PC-9 (cell line): ENCODE measurements at regions of chr16 and their contacts with region 1.

Region 1: DNA sequence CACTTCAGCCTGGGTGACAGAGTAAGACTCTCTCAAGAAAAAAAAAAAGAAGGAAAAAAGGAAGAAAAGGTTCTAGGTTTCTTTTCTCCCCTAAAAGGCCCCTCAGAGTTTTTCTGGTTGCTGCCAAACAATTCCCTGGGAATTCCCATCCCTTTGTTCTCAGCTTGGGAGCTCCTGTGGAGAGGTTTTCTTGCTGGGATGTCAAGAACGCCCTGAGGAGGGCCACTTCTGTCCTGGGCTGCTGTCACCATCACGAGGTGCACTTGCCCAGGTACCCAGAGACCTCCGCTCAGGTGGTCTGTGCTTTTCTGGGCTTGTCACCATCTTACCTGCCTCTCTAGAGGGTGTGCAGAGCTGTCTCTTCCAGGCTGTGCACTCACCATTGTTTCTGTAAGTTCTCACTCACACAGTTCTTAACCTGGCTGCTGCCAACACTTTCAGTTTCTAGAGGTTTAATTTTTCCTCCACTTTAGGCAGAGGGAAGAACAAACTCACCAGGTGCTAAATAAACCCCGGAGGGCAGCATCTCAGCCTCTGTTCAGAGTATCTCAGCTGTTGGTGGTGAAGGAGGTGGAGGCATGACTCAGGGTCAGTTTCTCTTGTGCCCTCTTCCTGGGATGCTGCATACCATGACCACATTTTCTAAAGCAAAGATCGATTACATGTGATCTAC is 2.4 kb upstream of the COX6A2 start:
- DNase-seq: peak in 1 of 2 experiments; percentile 45
- H3K4me3 ChIP-seq: no peak overlapping the region
- H3K27ac ChIP-seq: no peak overlapping the region
- H3K4me1 ChIP-seq: no peaks in the 10 kb centered on the region
- H3K27me3 ChIP-seq: 0 out of 2 replicates have a peak, but pooled peaks cover 1% of the 10 kb centered on the region
- CTCF ChIP-seq: no peak

Region 2: DNA sequence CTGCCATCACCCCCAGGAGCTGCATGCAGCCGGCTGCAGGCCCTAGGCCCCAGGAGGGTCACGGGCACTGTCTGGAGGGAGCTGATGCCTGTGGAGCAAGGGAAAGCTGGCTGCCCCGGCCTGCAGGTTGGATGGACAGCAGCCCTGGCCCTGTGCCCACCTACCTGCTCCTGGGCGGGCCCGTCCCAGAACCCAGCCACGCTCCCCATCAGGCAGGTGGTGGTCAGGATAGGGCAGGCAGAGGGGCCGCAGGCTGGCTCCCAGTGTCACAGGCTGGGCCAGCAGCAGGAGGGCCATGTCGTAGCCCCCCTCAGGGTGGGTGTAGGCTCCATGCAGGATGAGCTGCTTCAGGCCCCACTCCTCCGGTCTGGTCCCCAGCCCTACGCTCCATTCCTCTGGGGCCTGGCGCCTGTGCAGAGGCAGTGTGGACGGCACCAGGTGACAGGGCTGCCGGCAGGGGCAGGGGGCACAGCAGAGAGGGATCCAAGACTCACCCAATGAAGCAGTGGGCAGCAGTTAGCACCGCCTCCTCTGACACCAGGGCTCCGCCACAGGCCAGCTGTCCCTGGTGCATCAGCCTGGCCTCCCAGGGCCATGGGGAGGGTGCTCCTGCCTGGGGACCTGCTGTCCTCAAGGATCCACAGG is 345.8 kb before region 1 on chr16:
- CTCF ChIA-PET with region 1: no interaction called
- POLR2A ChIA-PET with region 1: interaction called, 18 read pairs
- intact Hi-C with region 1: no loop called
- DNase-seq: no peak
- H3K4me3 ChIP-seq: no peak overlapping the region
- H3K27ac ChIP-seq: no peak overlapping the region
- H3K4me1 ChIP-seq: no peaks in the 10 kb centered on the region
- H3K27me3 ChIP-seq: no peaks in the 10 kb centered on the region
- CTCF ChIP-seq: no peak

Region 3: DNA sequence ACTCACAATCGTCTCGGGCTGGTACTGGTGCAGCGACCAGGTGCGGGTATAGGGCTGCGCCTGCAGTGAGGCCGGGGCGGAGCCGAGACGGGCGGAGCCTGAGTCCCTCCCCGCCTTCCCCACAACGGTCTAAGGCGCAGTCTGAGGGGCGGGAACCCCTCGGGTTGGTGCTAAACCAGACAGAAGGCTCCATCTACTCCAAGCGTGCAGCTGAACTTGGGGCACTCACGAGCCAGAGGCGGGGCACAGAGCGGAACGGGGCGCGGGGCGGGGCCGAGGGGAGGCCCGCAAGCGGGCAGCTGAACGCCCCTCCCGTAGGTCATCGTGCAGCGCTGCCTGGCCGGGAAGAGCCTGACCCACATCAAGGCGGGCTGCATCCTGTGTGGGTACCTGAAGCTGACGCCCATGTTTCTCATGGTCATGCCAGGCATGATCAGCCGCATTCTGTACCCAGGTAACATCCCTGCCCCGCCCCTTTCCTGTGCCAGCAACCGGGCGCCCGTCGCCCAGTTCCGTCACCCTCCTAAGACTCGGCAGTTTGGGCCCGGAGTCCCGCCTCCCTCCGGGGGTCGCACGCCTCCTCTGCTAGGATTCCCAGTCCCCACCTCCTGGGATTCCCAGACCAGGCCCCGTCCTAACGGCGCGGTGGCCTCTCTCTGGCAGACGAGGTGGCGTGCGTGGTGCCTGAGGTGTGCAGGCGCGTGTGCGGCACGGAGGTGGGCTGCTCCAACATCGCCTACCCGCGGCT is 57.4 kb after region 1 on chr16:
- CTCF ChIA-PET with region 1: no interaction called
- POLR2A ChIA-PET with region 1: no interaction called
- intact Hi-C with region 1: no loop called
- DNase-seq: peak in 1 of 2 experiments; percentile 82
- H3K4me3 ChIP-seq: peak overlapping the region; percentile 53; the same call in 1 of the 2 replicates
- H3K27ac ChIP-seq: no peak overlapping the region
- H3K4me1 ChIP-seq: 0 out of 2 replicates have a peak, but pooled peaks cover 8% of the 10 kb centered on the region
- H3K27me3 ChIP-seq: no peaks in the 10 kb centered on the region
- CTCF ChIP-seq: no peak